Activated naive CD4-positive, alpha-beta T cell treated with anti-CD3 and anti-CD28 coated beads for 36 hours (primary cell): ENCODE measurements at regions of chr4 and their contacts with region 1.

Region 1: GRCh38 chr4:103099691-103100392 is at the start of gene BDH2:
- DNase-seq: peak; percentile 65
- H3K4me3 Mint-ChIP-seq: peak within 1 kb of the TSS; percentile 79
- H3K27ac Mint-ChIP-seq: peak within 1 kb of the TSS; percentile 81
- H3K4me1 Mint-ChIP-seq: peaks cover 26% of the 10 kb centered on the region
- H3K27me3 Mint-ChIP-seq: no peaks in the 10 kb centered on the region
- total RNA-seq, gene BDH2: 16.2 to 20.4 TPM

Region 2: GRCh38 chr4:102255454-102255853 is 844.4 kb before region 1 on chr4:
- CTCF ChIA-PET with region 1: no interaction called
- intact Hi-C with region 1: loop called (anchors 1 kb)
- DNase-seq: no peak
- H3K4me3 Mint-ChIP-seq: no peak overlapping the region
- H3K27ac Mint-ChIP-seq: no peak overlapping the region
- H3K4me1 Mint-ChIP-seq: no peaks in the 10 kb centered on the region
- H3K27me3 Mint-ChIP-seq: no peaks in the 10 kb centered on the region

Region 3: DNA sequence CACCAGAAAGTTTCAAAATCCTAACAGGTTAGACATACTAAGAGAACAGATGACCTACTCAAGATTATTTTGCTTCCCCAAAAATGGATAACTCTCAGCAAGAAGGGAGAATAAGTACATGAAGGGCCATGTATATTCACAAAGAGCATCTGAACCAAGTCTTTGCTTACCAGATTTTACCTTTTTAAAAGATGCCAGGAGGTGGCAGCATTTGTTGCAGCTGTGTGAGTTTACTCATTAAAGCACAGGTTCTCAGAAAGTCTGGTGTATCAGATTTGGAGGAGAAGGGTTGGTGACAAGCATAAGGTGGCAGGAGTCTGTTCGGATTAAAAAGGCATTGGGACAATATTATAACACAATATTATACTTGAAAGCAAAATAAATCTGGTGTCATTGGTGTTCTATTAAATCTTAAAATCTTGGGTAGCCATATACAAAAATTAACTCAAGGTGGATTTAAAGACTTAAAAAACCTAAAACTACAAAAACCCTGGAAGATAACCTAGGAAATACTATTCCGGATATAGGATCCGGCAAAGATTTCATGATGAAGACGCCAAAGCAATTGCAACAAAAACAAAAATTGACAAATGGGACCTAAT is 650.0 kb before region 1 on chr4:
- CTCF ChIA-PET with region 1: no interaction called
- intact Hi-C with region 1: loop called (anchors 2 kb)
- DNase-seq: peak; percentile 76
- H3K4me3 Mint-ChIP-seq: no peak overlapping the region
- H3K27ac Mint-ChIP-seq: no peak overlapping the region
- H3K4me1 Mint-ChIP-seq: peaks cover 18% of the 10 kb centered on the region
- H3K27me3 Mint-ChIP-seq: no peaks in the 10 kb centered on the region

Region 4: GRCh38 chr4:102760645-102761295 is 339.1 kb before region 1 on chr4 and contains the start of gene MANBA:
- CTCF ChIA-PET with region 1: interaction called, 3 read pairs
- intact Hi-C with region 1: loop called (anchors 1 kb)
- DNase-seq: peak; percentile 89
- H3K4me3 Mint-ChIP-seq: peak within 1 kb of the TSS; percentile 88
- H3K27ac Mint-ChIP-seq: peak within 1 kb of the TSS; percentile 36
- H3K4me1 Mint-ChIP-seq: peaks cover 27% of the 10 kb centered on the region
- H3K27me3 Mint-ChIP-seq: no peaks in the 10 kb centered on the region
- total RNA-seq, gene MANBA: 9.8 to 11.0 TPM

Region 5: GRCh38 chr4:102918859-102919258 is 181.0 kb before region 1 on chr4:
- CTCF ChIA-PET with region 1: no interaction called
- intact Hi-C with region 1: no loop called
- DNase-seq: no peak
- H3K4me3 Mint-ChIP-seq: no peak overlapping the region
- H3K27ac Mint-ChIP-seq: no peak overlapping the region
- H3K4me1 Mint-ChIP-seq: no peaks in the 10 kb centered on the region
- H3K27me3 Mint-ChIP-seq: no peaks in the 10 kb centered on the region

Region 6: DNA sequence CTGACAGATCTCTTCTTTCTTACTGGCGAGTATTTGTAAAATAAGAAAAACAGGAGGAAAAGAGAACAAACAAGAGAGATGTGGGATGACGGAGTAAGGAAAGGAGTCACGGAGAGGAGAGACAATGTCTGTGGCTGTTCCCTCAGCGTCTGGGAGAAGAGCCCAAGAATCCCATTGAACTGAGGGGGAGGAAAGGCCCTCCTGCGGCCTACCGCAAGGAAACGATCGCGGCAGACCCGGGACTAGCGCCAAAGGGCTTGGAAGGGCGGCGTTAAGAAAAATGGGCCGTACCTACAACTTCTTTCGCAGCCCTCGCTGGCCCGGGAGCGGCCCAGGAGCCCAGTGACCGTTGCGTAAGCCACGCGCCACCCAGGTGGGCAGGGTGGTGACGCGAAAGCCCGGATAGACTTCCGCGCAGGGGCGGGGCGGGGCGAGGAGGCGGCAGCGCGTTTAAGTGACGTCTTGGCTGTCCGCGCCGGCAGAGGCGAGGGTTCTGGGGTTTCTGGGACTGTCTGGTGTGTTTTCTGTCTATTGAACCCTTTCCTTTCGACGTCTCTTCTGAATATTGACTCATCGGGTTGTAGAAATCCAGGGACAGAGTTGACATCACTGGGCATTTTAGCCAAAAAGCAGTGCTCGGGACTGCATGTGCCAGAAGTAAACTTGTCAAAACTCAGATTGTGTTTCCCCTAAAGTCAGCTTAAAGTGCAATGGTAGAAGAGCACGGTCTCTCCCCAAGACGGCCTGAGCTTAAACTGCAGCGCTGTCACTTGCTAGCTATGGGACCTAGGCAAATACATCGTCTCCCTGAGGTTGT is 80.3 kb before region 1 on chr4 and contains the start of gene SLC9B1:
- CTCF ChIA-PET with region 1: interaction called, 4 read pairs
- intact Hi-C with region 1: loop called (anchors 1 kb)
- DNase-seq: peak; percentile 96
- H3K4me3 Mint-ChIP-seq: peak within 1 kb of the TSS; percentile 96
- H3K27ac Mint-ChIP-seq: peak within 1 kb of the TSS; percentile 97
- H3K4me1 Mint-ChIP-seq: peaks cover 20% of the 10 kb centered on the region
- H3K27me3 Mint-ChIP-seq: no peaks in the 10 kb centered on the region
- total RNA-seq, gene SLC9B1: 2.0 to 3.5 TPM

Region 7: GRCh38 chr4:103075901-103076739 is 23.7 kb before region 1 on chr4:
- CTCF ChIA-PET with region 1: interaction called, 6 read pairs
- intact Hi-C with region 1: loop called (anchors 1 kb)
- DNase-seq: peak; percentile 62
- H3K4me3 Mint-ChIP-seq: peak overlapping the region; percentile 82
- H3K27ac Mint-ChIP-seq: peak overlapping the region; percentile 98
- H3K4me1 Mint-ChIP-seq: peaks cover 47% of the 10 kb centered on the region
- H3K27me3 Mint-ChIP-seq: no peaks in the 10 kb centered on the region